PC-9 (cell line): ENCODE measurements at regions of chr17 and their contacts with region 1.

Region 1: DNA sequence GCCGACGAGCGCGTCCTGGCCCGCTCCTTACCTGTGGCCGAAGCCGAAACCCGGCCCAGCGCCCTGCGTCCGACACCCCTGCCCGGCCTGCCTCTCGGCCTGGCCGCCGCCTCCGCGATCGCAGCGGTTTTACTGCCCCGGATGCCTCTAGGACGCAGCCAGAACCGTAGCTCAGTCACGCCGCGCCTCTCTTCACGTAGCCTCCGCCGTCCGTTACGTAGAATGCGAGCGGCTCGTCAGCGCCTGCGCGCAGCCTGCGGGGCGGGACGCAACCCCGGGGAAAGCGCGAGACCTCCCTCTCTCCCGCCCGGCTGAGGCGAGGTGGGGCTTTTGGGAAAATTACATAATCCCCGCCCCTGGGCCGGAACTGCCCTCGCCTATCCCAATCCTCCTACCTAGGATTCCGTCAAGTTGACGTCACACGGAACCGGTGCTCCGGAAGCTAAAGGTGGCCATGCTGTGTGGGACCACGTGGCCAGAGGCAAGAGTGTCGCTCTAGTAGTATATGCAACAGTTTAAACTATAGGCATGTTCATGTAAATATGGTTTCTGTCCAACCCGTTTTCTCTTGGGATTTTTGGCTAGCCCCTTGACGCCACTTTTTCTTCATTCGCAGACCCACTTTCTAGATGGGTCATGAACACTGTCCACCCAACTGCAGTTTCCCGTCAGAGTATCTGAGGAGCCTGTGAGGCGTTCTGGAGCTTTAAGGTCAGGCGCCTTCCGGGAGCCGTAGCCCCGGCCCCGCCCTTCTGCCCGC is at the start of gene CCDC47:
- DNase-seq: peak; percentile 96 to 99
- H3K4me3 ChIP-seq: peak within 1 kb of the TSS; percentile 80
- H3K27ac ChIP-seq: peak within 1 kb of the TSS; percentile 96
- H3K4me1 ChIP-seq: peaks cover 50% of the 10 kb centered on the region
- H3K27me3 ChIP-seq: no peaks in the 10 kb centered on the region
- CTCF ChIP-seq: no peak
- total RNA-seq, gene CCDC47: 64.0 and 89.3 TPM in 2 replicates

Region 2: GRCh38 chr17:63171428-63172393 is 601.9 kb before region 1 on chr17:
- CTCF ChIA-PET with region 1: no interaction called
- POLR2A ChIA-PET with region 1: interaction called, 15 read pairs
- intact Hi-C with region 1: no loop called
- DNase-seq: no peak
- H3K4me3 ChIP-seq: no peak overlapping the region
- H3K27ac ChIP-seq: no peak overlapping the region
- H3K4me1 ChIP-seq: no peaks in the 10 kb centered on the region
- H3K27me3 ChIP-seq: no peaks in the 10 kb centered on the region
- CTCF ChIP-seq: no peak

Region 3: DNA sequence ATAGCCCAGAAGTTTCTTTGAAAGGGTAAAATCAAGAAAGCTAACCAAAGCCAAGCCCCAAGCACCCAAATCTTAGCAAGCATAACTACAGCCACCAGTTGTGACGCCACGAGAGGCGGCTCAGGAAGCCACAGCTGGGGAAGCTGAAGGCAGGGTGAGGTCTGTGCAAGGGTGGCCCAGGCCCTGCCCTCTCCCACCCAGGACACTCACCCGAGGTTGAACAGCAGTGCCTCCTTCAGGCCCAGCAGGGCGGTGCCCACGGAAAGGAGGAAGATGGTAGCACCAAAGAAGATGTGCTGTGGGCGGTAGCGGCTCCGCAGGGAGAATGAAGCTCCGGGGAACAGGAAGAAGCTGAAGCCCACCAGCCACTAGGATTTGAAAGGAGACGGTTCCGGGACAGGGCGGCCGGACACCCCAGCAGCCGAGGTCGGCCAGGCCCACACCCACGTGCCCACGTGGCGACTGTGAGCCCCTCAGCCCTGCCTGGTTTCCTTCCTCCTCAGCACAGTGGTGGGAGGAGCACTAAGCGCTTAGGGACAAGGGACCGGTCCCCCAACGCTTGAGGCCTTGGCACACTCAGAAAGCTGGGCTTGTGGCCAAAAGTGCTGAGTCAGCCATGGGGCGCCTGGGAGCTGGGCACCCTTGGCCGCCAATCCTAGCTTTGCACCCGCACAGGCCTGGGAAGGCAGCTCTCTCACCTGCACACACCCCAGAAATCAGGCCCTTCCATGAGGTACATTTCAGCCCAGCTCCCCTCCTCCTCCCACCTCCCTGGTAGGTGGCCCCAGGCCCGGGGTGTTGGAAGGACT is 338.5 kb before region 1 on chr17:
- CTCF ChIA-PET with region 1: no interaction called
- POLR2A ChIA-PET with region 1: no interaction called
- intact Hi-C with region 1: no loop called
- DNase-seq: peak; percentile 68 to 89
- H3K4me3 ChIP-seq: no peak overlapping the region
- H3K27ac ChIP-seq: no peak overlapping the region
- H3K4me1 ChIP-seq: peaks cover 11% of the 10 kb centered on the region
- H3K27me3 ChIP-seq: no peaks in the 10 kb centered on the region
- CTCF ChIP-seq: no peak; the same call in 1 of the 2 replicates

Region 4: GRCh38 chr17:63760771-63761539 is 12.6 kb before region 1 on chr17:
- CTCF ChIA-PET with region 1: no interaction called
- POLR2A ChIA-PET with region 1: interaction called, 24 read pairs
- intact Hi-C with region 1: no loop called
- DNase-seq: no peak
- H3K4me3 ChIP-seq: no peak overlapping the region
- H3K27ac ChIP-seq: no peak overlapping the region
- H3K4me1 ChIP-seq: no peaks in the 10 kb centered on the region
- H3K27me3 ChIP-seq: no peaks in the 10 kb centered on the region
- CTCF ChIP-seq: no peak

Region 5: GRCh38 chr17:63842540-63843386 is 69.2 kb after region 1 on chr17 and contains the start of gene SMARCD2:
- CTCF ChIA-PET with region 1: no interaction called
- POLR2A ChIA-PET with region 1: interaction called, 3 read pairs
- intact Hi-C with region 1: loop called (anchors 2 kb)
- DNase-seq: peak; percentile 92 to 97
- H3K4me3 ChIP-seq: peak within 1 kb of the TSS; percentile 86
- H3K27ac ChIP-seq: peak within 1 kb of the TSS; percentile 47; the same call in 1 of the 2 replicates
- H3K4me1 ChIP-seq: peaks cover 43% of the 10 kb centered on the region
- H3K27me3 ChIP-seq: no peaks in the 10 kb centered on the region
- CTCF ChIP-seq: no peak
- total RNA-seq, gene SMARCD2: 73.6 and 98.7 TPM in 2 replicates

Region 6: DNA sequence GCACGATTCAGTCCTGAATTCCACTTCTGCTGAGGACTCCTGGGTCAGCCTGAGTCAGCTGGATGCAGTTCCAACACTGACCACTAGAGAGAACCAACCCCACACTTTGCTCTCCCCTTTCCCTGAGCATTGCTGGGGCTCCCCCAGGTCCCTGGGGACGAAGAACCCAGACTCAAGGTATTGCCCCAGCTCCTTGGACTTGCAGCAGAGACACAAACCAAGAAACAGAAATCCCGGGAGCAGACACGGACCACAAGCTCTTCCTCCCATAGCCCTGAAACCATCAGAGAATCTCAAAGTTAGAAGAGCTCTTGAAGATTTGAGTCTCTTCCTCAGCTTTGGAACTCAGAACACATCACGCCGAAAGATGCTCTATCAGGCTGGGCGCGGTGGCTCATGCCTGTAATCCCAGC is 145.8 kb after region 1 on chr17:
- CTCF ChIA-PET with region 1: no interaction called
- POLR2A ChIA-PET with region 1: no interaction called
- intact Hi-C with region 1: no loop called
- DNase-seq: peak in 1 of 2 experiments; percentile 66
- H3K4me3 ChIP-seq: no peak overlapping the region
- H3K27ac ChIP-seq: no peak overlapping the region
- H3K4me1 ChIP-seq: no peaks in the 10 kb centered on the region
- H3K27me3 ChIP-seq: peaks cover 18% of the 10 kb centered on the region; the same call in 1 of the 2 replicates
- CTCF ChIP-seq: peak; percentile 96